ENCODE measurements at regions of chr2 and their contacts with region 1.

Region 1: GRCh38 chr2:122168799-122169198 is 413.3 kb downstream of the TSN start:
- DNase-seq: no peak
- ATAC-seq: no peak

Region 2: GRCh38 chr2:122843503-122843902 is 674.7 kb after region 1 on chr2:
- intact Hi-C with region 1: loop called (anchors 5 kb)
- DNase-seq: no peak
- ATAC-seq: peak; percentile 74

Measured in sciatic nerve (tissue), 2 donors.